AG04449 (cell line): ENCODE measurements at regions of chr6 and their contacts with region 1.

Region 1: GRCh38 chr6:149834513-149835481 is 29.4 kb downstream of the LRP11 start:
- DNase-seq: no peak
- H3K4me3 ChIP-seq: no peak overlapping the region
- CTCF ChIP-seq: peak; percentile 71

Region 2: GRCh38 chr6:149823013-149823412 is 11.8 kb before region 1 on chr6:
- CTCF ChIA-PET with region 1: interaction called, 37 read pairs
- POLR2A ChIA-PET with region 1: no interaction called
- DNase-seq: no peak
- H3K4me3 ChIP-seq: no peak overlapping the region
- CTCF ChIP-seq: no peak

Region 3: DNA sequence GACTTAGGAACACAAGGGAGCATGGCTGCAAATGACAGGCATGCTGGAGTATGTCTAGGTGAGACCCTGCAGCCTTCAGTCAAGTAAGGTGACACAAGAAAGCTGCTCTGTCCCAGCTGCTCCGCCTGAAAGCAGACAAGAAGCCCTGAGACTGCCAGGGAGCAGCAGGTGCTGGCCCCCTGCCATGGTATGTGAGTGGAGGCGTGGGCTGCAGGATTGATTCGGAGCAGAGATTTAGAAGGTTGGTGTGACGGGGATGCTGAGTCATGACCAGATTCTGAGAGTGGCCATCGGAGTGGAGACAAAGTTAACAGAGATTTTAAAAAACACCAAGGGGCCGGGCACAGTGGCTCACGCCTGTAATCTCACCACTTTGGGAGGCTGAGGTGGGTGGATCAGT is 11.5 kb after region 1 on chr6:
- CTCF ChIA-PET with region 1: interaction called, 81 read pairs
- POLR2A ChIA-PET with region 1: no interaction called
- DNase-seq: no peak
- H3K4me3 ChIP-seq: no peak overlapping the region
- CTCF ChIP-seq: no peak

Region 4: GRCh38 chr6:149851458-149852110 is 16.8 kb after region 1 on chr6:
- CTCF ChIA-PET with region 1: interaction called, 81 read pairs
- POLR2A ChIA-PET with region 1: interaction called, 6 read pairs
- DNase-seq: no peak
- H3K4me3 ChIP-seq: no peak overlapping the region
- CTCF ChIP-seq: no peak

Region 5: GRCh38 chr6:149863697-149864577 is 29.1 kb after region 1 on chr6 and contains the start of gene LRP11:
- CTCF ChIA-PET with region 1: interaction called, 61 read pairs
- POLR2A ChIA-PET with region 1: no interaction called
- DNase-seq: no peak
- H3K4me3 ChIP-seq: peak within 1 kb of the TSS; percentile 67
- CTCF ChIP-seq: no peak

Region 6: DNA sequence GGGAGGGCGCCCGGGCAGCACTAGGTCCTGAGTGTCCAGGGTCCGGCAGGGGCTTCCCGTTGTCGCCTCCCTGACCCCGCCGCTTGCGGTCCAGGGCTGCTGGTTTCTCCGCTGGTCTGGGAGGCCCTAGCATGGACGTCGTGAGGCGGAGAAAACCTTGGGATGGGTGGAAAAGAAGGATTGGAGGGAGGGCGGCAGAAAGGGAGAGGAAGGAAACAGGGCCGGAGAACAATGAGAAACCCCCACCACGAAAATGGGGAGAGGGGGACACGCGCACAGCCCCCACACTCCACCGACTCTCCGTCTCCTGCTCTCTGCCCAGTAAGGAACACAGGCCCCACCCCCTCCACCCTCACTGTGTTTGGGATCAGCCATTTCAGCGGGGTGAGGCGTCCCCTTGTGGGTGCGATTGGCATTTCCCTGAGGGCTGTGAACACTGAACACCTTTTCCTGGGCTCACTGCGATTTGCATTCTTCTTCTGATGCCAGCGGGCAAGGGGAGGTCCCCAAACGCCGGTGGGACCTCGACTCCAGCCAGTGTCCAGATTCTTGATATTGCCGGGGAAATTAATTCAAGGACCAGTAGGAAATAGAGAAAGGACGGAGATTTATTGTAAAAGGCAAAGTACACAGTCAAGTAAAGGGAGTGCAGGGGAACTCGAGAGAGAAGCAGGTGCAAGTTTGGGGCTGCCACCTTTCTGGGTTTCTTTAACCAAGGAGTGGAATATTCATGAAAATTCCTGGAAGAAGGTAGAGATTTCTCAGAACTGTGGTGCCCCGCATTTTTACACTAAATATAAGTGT is 91.4 kb after region 1 on chr6:
- CTCF ChIA-PET with region 1: interaction called, 62 read pairs
- POLR2A ChIA-PET with region 1: no interaction called
- DNase-seq: no peak
- H3K4me3 ChIP-seq: peak overlapping the region; percentile 57
- CTCF ChIP-seq: peak; percentile 93

Region 7: GRCh38 chr6:150016324-150017185 is 181.8 kb after region 1 on chr6:
- CTCF ChIA-PET with region 1: interaction called, 14 read pairs
- POLR2A ChIA-PET with region 1: no interaction called
- DNase-seq: no peak
- H3K4me3 ChIP-seq: no peak overlapping the region
- CTCF ChIP-seq: peak; percentile 43

Region 8: DNA sequence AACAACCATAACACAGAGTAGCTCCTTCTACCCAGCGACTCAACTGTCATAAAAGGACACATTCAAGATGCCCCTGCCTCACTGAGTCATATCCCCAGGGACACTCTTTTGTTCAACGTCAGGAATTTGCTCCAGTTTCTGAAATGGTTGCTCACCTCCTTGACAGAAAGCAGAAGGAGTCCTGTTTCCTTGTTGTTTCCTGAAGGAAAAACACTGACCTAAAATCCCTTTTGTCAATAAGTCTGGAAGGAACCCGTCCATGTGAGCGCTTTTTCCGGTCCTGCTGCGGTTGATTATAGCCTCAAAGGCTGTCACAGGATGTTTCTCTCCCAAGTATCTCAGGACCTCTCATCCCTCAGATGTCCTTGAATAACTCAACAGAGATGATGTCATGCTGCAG is 651.2 kb after region 1 on chr6:
- CTCF ChIA-PET with region 1: no interaction called
- POLR2A ChIA-PET with region 1: no interaction called
- DNase-seq: no peak
- H3K4me3 ChIP-seq: no peak overlapping the region
- CTCF ChIP-seq: no peak